ENCODE measurements at regions of chr17 and their contacts with region 1.

Region 1: DNA sequence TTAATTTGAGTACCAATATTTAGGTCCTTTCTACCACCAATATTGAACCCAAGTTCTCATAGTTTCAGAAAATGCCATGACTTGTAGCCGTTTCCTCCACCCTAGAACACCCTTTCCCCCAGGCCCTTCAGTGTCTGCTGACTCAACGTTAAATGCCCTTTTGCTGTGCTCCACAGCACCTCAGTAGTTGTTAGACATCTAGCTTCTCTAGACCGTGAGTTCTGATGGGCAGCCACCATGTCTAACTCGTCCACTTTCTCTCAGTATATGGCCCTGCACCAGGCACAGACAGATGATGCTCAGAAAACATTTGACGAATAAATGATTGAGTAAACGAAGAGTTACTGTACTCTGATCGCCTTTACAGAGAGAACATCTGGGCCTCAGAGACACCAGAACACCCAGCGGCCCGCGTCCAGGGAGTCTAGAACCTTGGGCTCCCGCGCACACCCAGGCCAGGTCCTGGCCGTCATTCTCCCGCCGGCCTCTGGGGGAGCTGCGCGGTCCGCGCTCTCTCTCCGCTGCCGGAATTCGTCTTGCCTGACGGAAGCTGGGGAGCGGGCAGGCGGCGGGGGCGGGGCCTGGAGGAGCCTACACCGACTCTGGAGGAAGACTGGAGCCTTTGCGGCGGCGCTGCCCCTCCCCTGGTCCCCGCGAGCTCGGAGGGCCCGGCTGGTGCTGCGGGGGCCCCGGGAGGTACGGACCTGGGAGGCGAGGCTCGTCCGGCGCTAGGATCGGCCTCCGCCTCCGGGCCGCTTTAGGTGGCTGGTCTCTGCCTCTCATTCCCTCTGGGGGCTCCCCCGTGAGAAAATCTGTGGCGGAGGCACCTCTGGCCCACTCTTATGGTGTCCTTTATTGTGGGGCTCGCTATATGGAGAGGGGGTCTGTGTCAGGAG is at the start of gene NKIRAS2:
- DNase-seq: peak; percentile 97
- H3K4me3 ChIP-seq: peak within 1 kb of the TSS; percentile 78
- H3K4me3 Mint-ChIP-seq: peak within 1 kb of the TSS; percentile 88
- H3K27ac Mint-ChIP-seq: peak within 1 kb of the TSS; percentile 91
- H3K4me1 ChIP-seq: peaks cover 29% of the 10 kb centered on the region
- H3K4me1 Mint-ChIP-seq: peaks cover 32% of the 10 kb centered on the region
- H3K27me3 ChIP-seq: no peaks in the 10 kb centered on the region
- H3K27me3 Mint-ChIP-seq: no peaks in the 10 kb centered on the region
- CTCF ChIP-seq: peak; percentile 89 to 95
- total RNA-seq, gene NKIRAS2: 51.6 and 55.0 TPM in 2 replicates

Region 2: DNA sequence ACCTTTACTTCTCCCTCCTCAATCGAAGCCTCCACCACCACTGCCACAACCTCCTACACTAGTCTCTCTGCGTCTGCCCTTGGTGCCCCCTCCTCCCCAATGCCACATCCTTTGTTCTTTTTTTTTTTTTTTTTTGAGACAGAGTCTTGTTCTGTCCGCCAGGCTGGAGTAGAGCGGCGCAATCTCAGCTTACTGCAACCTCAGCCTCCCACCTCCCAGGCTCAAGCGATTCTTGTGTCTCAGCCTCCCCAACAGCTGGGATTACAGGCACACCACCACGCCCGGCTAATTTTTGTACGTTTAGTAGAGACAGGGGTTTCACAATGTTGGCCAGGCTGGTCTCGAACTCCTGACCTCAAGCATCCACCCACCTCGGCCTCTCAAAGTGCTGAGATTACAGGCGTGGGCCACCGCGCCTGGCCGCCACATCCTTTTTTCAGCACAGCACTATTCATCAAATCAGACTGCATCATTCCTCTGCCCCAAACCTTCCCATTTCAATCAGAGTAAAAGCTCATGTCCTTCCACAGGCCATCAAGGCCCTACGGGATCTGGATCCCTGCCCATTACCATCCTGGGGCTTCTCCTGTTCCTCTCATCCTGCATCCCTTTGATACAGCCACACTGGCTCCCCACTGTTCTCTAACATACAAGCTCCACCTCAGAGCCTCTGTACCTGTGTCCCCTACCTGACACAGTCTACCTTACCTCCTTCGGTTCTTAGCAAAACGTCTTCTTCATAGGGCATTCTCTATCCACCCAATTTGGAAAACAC is 156.5 kb before region 1 on chr17:
- CTCF ChIA-PET with region 1: no interaction called
- POLR2A ChIA-PET with region 1: no interaction called
- intact Hi-C with region 1: no loop called
- DNase-seq: no peak
- H3K4me3 ChIP-seq: no peak overlapping the region; the same call in 1 of the 2 replicates
- H3K4me3 Mint-ChIP-seq: no peak overlapping the region
- H3K27ac Mint-ChIP-seq: no peak overlapping the region
- H3K4me1 ChIP-seq: peaks cover 10% of the 10 kb centered on the region
- H3K4me1 Mint-ChIP-seq: peaks cover 7% of the 10 kb centered on the region
- H3K27me3 ChIP-seq: no peaks in the 10 kb centered on the region
- H3K27me3 Mint-ChIP-seq: no peaks in the 10 kb centered on the region
- CTCF ChIP-seq: no peak

Region 3: DNA sequence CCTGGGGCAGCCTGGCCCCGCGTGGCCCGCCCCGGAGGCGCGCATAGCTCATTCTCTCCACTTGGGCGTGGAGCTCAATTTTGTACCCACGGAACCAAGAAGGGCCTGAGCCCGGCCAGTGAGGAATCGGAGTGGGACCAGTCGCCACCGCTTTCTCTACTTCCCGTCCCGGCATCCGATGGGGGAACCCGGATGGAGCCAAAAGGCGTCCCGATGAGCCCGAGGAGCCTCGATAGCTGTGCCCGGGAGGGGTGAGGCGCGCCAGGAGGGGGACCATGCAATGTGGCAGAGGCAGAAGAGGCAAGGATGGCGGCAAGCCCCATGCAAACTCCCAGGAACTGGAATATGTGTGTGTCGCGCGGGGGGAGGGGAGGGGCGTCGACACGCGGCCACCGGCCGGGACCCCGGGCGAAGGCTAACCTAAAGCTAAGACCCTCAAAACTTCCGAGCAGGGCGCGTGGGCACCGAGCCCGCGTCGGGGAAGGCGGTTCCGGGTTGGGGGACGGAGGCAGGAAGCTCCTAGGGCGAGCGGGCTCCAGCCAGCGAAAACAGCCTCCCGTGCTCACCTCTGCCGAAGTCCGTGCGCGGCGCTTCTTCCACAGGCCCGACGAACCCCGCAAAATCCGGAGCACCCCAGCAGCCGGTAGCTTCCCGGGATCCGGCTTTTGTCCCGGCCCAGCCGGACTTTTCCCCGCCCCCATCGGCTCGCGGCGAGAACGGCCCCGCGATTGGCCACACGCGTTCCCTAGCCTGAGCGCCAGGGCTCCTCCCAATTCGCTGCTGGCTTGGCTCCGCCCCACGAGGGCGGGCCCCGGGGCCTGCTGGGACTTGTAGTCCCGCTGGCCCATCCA is 101.2 kb before region 1 on chr17 and contains the start of gene ACLY:
- CTCF ChIA-PET with region 1: no interaction called
- POLR2A ChIA-PET with region 1: interaction called, 5 read pairs
- intact Hi-C with region 1: loop called (anchors 2 kb)
- DNase-seq: peak; percentile 98 to 100
- H3K4me3 ChIP-seq: peak within 1 kb of the TSS; percentile 66
- H3K4me3 Mint-ChIP-seq: peak within 1 kb of the TSS; percentile 94
- H3K27ac Mint-ChIP-seq: peak within 1 kb of the TSS; percentile 79
- H3K4me1 ChIP-seq: peaks cover 47% of the 10 kb centered on the region
- H3K4me1 Mint-ChIP-seq: peaks cover 34% of the 10 kb centered on the region
- H3K27me3 ChIP-seq: no peaks in the 10 kb centered on the region
- H3K27me3 Mint-ChIP-seq: no peaks in the 10 kb centered on the region
- CTCF ChIP-seq: no peak
- total RNA-seq, gene ACLY: 246 and 252 TPM in 2 replicates

Region 4: DNA sequence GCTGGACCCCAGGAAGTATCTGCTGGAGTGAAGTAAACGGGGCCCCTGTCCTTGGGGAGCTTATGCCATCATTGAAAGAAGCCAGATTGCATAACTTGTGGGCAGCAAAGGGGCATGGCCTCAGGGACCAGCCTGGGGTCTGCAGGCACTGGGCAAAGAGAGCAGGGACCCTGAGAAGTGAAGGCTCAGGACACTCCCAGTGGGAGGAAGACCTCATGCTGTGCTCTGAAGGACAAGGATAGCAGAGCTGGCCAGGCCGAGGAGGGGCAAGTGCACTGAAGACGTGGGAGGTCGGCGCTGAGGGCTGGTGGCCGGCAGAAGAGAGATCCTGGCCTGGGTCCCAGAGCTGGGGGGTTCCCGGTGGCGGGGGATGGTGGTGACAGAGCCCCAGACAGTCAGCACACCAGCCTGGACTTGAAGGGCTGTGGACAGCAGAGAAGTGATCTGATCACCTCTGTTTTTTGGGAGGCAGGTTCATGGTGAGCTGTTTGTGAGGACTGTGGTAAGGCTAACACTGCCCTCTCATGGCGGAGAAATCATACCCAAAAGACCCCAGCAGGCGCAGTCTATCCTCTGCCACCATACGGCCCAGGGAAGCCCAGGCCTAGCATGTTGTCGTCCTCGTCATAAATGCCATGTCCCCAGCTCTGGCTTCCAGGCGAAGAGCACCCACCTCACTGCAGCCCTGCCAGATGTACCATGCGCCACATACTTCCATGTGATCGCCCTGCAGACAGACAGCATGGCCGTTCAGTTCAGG is 60.2 kb before region 1 on chr17:
- CTCF ChIA-PET with region 1: interaction called, 7 read pairs
- POLR2A ChIA-PET with region 1: interaction called, 11 read pairs
- intact Hi-C with region 1: loop called (anchors 2 kb)
- DNase-seq: peak; percentile 68 to 69
- H3K4me3 ChIP-seq: no peak overlapping the region
- H3K4me3 Mint-ChIP-seq: no peak overlapping the region
- H3K27ac Mint-ChIP-seq: peak overlapping the region; percentile 37
- H3K4me1 ChIP-seq: peaks cover 20% of the 10 kb centered on the region
- H3K4me1 Mint-ChIP-seq: peaks cover 16% of the 10 kb centered on the region
- H3K27me3 ChIP-seq: no peaks in the 10 kb centered on the region
- H3K27me3 Mint-ChIP-seq: no peaks in the 10 kb centered on the region
- CTCF ChIP-seq: peak; percentile 60 to 62

Region 5: GRCh38 chr17:41966463-41967140 is 53.2 kb before region 1 on chr17 and contains the start of gene CNP:
- CTCF ChIA-PET with region 1: interaction called, 7 read pairs
- POLR2A ChIA-PET with region 1: interaction called, 27 read pairs
- intact Hi-C with region 1: loop called (anchors 2 kb)
- DNase-seq: peak; percentile 92 to 96
- H3K4me3 ChIP-seq: peak within 1 kb of the TSS; percentile 83
- H3K4me3 Mint-ChIP-seq: peak within 1 kb of the TSS; percentile 79
- H3K27ac Mint-ChIP-seq: peak within 1 kb of the TSS; percentile 0
- H3K4me1 ChIP-seq: peaks cover 20% of the 10 kb centered on the region
- H3K4me1 Mint-ChIP-seq: peaks cover 23% of the 10 kb centered on the region
- H3K27me3 ChIP-seq: no peaks in the 10 kb centered on the region
- H3K27me3 Mint-ChIP-seq: no peaks in the 10 kb centered on the region
- CTCF ChIP-seq: no peak
- total RNA-seq, gene CNP: 90.1 and 94.5 TPM in 2 replicates

Region 6: DNA sequence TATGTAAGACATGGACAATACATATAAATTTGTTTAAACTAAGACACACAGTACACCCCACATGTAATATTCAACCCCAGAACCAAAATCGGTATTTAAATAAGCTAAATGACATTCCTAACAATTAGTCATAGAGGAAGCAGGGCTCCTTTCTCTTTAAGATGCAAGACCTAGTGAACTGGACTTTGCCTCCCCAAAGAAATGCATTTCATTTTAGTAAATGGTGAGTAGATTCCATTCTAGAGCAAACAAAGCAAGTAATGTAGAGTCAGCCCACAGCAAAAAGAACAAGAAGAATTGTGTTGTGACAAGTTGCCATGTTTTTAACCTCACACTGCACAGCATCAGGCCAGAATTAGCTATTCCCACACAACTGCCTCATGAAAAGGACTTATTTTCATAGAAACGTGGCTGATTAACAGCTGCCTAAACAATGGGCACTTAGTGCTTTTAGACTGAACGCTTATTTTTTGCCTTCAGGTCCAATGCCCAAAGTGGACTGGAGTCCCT is 16.9 kb before region 1 on chr17:
- CTCF ChIA-PET with region 1: interaction called, 17 read pairs
- POLR2A ChIA-PET with region 1: interaction called, 40 read pairs
- intact Hi-C with region 1: loop called (anchors 2 kb)
- DNase-seq: peak in 1 of 2 experiments; percentile 67
- H3K4me3 ChIP-seq: 0 out of 2 replicates have a peak overlapping the region, but pooled peaks have one; percentile 1
- H3K4me3 Mint-ChIP-seq: peak overlapping the region; percentile 68
- H3K27ac Mint-ChIP-seq: peak overlapping the region; percentile 92
- H3K4me1 ChIP-seq: peaks cover 49% of the 10 kb centered on the region
- H3K4me1 Mint-ChIP-seq: peaks cover 26% of the 10 kb centered on the region
- H3K27me3 ChIP-seq: no peaks in the 10 kb centered on the region
- H3K27me3 Mint-ChIP-seq: no peaks in the 10 kb centered on the region
- CTCF ChIP-seq: no peak

Region 7: GRCh38 chr17:42061646-42062487 is 42.1 kb after region 1 on chr17:
- CTCF ChIA-PET with region 1: no interaction called
- POLR2A ChIA-PET with region 1: no interaction called
- intact Hi-C with region 1: loop called (anchors 2 kb)
- DNase-seq: no peak
- H3K4me3 ChIP-seq: no peak overlapping the region
- H3K4me3 Mint-ChIP-seq: no peak overlapping the region
- H3K27ac Mint-ChIP-seq: no peak overlapping the region
- H3K4me1 ChIP-seq: no peaks in the 10 kb centered on the region
- H3K4me1 Mint-ChIP-seq: no peaks in the 10 kb centered on the region
- H3K27me3 ChIP-seq: no peaks in the 10 kb centered on the region
- H3K27me3 Mint-ChIP-seq: no peaks in the 10 kb centered on the region
- CTCF ChIP-seq: no peak

Region 8: DNA sequence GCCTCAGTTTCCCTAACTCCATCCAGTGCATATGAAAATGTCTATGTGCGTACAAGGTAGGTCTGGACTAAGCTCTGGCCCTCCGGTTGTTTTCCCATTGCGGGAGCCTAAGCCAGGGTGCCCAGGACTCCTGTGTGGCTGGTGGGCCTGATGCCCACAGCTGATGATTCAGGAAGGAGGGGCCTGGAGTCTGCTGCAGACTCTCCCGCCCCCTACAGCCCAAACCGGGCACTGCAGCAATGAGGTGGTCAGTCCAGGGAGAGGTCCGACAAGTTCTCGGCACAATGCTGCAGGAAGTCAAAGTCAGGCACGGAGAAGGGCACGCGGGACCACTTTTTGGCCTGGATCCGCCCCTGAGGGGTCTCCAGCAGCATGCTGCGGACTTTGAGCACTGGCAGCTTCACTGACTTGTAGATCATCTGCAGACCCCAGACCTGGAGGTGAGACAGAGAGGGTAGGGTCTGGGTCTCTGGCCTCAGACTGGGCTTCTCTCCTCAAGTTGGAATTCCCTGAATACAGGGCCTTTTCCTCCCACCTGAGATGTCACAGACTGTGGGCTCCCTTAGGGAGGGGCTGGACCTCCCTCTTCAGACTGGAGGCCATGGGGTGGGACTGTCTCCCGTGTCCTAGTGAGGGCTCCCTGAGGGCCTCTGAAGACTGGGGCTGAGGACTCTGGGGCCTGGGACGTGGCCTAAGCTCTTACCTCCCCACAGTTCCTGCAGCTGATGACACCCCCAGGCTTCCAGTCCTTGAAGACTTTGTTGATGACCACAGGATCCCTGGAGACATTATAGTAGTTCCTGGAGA is 82.0 kb after region 1 on chr17:
- CTCF ChIA-PET with region 1: interaction called, 6 read pairs
- POLR2A ChIA-PET with region 1: no interaction called
- intact Hi-C with region 1: loop called (anchors 2 kb)
- DNase-seq: peak; percentile 74 to 84
- H3K4me3 ChIP-seq: no peak overlapping the region
- H3K4me3 Mint-ChIP-seq: no peak overlapping the region
- H3K27ac Mint-ChIP-seq: no peak overlapping the region
- H3K4me1 ChIP-seq: peaks cover 8% of the 10 kb centered on the region
- H3K4me1 Mint-ChIP-seq: no peaks in the 10 kb centered on the region
- H3K27me3 ChIP-seq: 0 out of 2 replicates have a peak, but pooled peaks cover 2% of the 10 kb centered on the region
- H3K27me3 Mint-ChIP-seq: peaks cover 3% of the 10 kb centered on the region
- CTCF ChIP-seq: peak; percentile 84 to 89

Measured in Caco-2 (cell line).